ENCODE measurements at regions of chr12 and their contacts with region 1.

Region 1: DNA sequence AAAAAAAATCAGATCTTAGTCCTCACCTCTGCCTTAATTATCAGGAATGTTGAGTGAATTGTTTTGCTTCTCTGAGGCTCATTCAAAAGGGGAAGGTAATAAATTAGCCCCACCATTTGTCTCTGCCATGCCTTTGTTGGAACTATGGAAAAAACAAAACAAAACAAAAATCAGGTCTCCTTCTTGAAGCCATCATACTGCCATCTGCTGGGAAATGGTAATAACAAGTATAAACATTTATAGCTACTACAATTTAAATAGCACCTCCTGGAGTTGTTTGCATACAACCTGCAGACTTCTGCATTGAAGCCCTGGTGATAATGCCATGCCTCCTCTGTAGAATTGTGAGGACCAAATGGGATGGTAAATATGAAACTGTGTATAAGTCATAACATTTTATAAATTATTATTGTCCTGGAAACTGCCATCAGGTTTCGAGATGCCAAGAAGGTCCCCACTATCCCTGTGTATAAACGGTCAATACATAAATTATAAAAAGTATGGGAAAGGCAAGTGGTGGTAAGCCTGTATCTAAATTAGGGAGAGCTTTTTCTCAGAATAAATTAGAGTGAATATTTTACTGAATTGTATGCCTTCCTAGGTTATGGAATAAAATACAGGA is 87.2 kb upstream of the FGD4 start:
- DNase-seq: peak in 2 of 5 donors; percentile 15 to 31
- H3K4me3 ChIP-seq: no peak overlapping the region
- H3K4me3 Mint-ChIP-seq: no peak overlapping the region
- H3K27ac ChIP-seq: no peak overlapping the region
- H3K27ac Mint-ChIP-seq: peak overlapping the region in 2 of 8 donors; percentile 13 to 63
- H3K4me1 ChIP-seq: no peaks in the 10 kb centered on the region
- H3K4me1 Mint-ChIP-seq: peaks cover 2 to 5% (median 4%) of the 10 kb centered on the region in 3 donors
- H3K27me3 ChIP-seq: no peaks in the 10 kb centered on the region
- H3K27me3 Mint-ChIP-seq: no peaks in the 10 kb centered on the region

Region 2: GRCh38 chr12:31682136-31682962 is 629.8 kb before region 1 on chr12:
- CTCF ChIA-PET with region 1: interaction called, 13 read pairs
- POLR2A ChIA-PET with region 1: no interaction called
- DNase-seq: peak; percentile 49 to 77 (median 61)
- H3K4me3 ChIP-seq: no peak overlapping the region
- H3K4me3 Mint-ChIP-seq: peak overlapping the region in 5 of 7 donors; percentile 28 to 86 (median 68)
- H3K27ac ChIP-seq: no peak overlapping the region
- H3K27ac Mint-ChIP-seq: peak overlapping the region in 6 of 8 donors; percentile 55 to 90 (median 86)
- H3K4me1 ChIP-seq: peaks cover 3% of the 10 kb centered on the region
- H3K4me1 Mint-ChIP-seq: peaks cover 6 to 11% (median 7%) of the 10 kb centered on the region in 3 donors
- H3K27me3 ChIP-seq: no peaks in the 10 kb centered on the region
- H3K27me3 Mint-ChIP-seq: no peaks in the 10 kb centered on the region

Region 3: DNA sequence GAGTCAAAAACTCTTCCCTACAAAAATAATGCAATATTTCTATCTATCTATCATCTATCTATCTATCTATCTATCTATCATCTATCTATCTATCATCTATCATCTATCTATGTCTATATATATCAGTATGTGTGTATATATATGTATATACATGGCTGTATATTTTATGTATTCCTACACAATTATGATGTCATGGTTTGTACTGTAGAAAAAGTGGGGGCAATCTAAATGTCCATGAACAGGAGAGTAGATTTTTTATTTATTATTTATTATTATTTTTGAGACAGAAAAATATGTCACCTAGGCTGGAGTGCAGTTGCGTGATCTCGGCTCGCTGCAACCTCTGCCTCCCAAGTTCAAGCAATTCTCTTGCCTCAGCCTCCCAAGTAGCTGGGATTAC is 251.1 kb before region 1 on chr12:
- CTCF ChIA-PET with region 1: interaction called, 15 read pairs
- POLR2A ChIA-PET with region 1: interaction called, 8 read pairs
- DNase-seq: no peak
- H3K4me3 ChIP-seq: no peak overlapping the region
- H3K4me3 Mint-ChIP-seq: no peak overlapping the region
- H3K27ac ChIP-seq: no peak overlapping the region
- H3K27ac Mint-ChIP-seq: no peak overlapping the region
- H3K4me1 ChIP-seq: no peaks in the 10 kb centered on the region
- H3K4me1 Mint-ChIP-seq: peaks cover 4 to 7% (median 5%) of the 10 kb centered on the region in 3 donors
- H3K27me3 ChIP-seq: no peaks in the 10 kb centered on the region
- H3K27me3 Mint-ChIP-seq: no peaks in the 10 kb centered on the region

Region 4: GRCh38 chr12:32290411-32290810 is 21.7 kb before region 1 on chr12:
- CTCF ChIA-PET with region 1: no interaction called
- POLR2A ChIA-PET with region 1: no interaction called
- DNase-seq: no peak
- H3K4me3 ChIP-seq: no peak overlapping the region
- H3K4me3 Mint-ChIP-seq: no peak overlapping the region
- H3K27ac ChIP-seq: no peak overlapping the region
- H3K27ac Mint-ChIP-seq: peak overlapping the region in 1 of 8 donors; percentile 13
- H3K4me1 ChIP-seq: no peaks in the 10 kb centered on the region
- H3K4me1 Mint-ChIP-seq: no peaks in the 10 kb centered on the region
- H3K27me3 ChIP-seq: no peaks in the 10 kb centered on the region
- H3K27me3 Mint-ChIP-seq: no peaks in the 10 kb centered on the region